Aorta (tissue), 5 donors: ENCODE measurements at regions of chr2 and their contacts with region 1.

Region 1: DNA sequence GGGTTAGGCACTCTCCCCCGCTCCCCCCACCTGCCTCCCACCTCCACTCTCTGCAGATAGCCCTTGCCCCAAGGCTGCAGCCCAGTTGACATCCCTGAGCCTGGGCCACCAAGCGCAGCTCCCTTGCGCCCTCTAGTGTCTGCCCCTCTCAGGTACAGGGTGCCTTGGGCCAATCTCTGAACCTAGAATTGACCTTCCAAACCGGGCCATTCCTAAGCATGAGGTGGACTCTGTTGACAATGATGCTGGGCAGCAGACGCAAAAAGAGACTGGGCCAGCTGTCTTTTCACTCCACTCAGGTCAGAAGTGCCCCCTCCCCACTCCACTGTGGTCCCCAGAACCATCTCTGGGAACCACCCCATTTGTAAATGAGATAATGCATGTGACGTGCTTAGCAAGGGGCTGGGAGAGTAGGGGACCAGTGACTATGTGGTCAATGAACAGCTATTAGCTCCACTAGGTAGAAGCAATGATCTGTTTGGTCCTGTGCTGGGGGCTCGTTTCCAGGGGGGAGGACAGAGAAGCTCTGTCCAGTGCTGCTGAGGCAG is 43.3 kb upstream of the PLB1 start:
- DNase-seq: peak; percentile 85 to 94
- ATAC-seq: peak; percentile 86
- H3K4me3 ChIP-seq: no peak overlapping the region
- H3K27ac ChIP-seq: no peak overlapping the region
- H3K4me1 ChIP-seq: no peaks in the 10 kb centered on the region
- H3K27me3 ChIP-seq: no peaks in the 10 kb centered on the region

Region 2: GRCh38 chr2:27754138-27754588 is 698.4 kb before region 1 on chr2:
- intact Hi-C with region 1: loop called in 1 of 2 experiments (anchors 5 kb)
- DNase-seq: peak; percentile 89 to 92
- ATAC-seq: peak; percentile 85
- H3K4me3 ChIP-seq: no peak overlapping the region
- H3K27ac ChIP-seq: no peak overlapping the region
- H3K4me1 ChIP-seq: no peaks in the 10 kb centered on the region
- H3K27me3 ChIP-seq: no peaks in the 10 kb centered on the region

Region 3: GRCh38 chr2:28392297-28393113 is 60.1 kb before region 1 on chr2 and contains the start of gene FOSL2:
- intact Hi-C with region 1: no loop called
- DNase-seq: peak; percentile 98
- ATAC-seq: peak; percentile 82
- H3K4me3 ChIP-seq: peak within 1 kb of the TSS; percentile 92 to 95
- H3K27ac ChIP-seq: peak within 1 kb of the TSS; percentile 92 to 99
- H3K4me1 ChIP-seq: no peaks in the 10 kb centered on the region
- H3K27me3 ChIP-seq: no peaks in the 10 kb centered on the region
- total RNA-seq, gene FOSL2: 184 to 260 TPM